PC-9 (cell line): ENCODE measurements at regions of chr19 and their contacts with region 1.

Region 1: DNA sequence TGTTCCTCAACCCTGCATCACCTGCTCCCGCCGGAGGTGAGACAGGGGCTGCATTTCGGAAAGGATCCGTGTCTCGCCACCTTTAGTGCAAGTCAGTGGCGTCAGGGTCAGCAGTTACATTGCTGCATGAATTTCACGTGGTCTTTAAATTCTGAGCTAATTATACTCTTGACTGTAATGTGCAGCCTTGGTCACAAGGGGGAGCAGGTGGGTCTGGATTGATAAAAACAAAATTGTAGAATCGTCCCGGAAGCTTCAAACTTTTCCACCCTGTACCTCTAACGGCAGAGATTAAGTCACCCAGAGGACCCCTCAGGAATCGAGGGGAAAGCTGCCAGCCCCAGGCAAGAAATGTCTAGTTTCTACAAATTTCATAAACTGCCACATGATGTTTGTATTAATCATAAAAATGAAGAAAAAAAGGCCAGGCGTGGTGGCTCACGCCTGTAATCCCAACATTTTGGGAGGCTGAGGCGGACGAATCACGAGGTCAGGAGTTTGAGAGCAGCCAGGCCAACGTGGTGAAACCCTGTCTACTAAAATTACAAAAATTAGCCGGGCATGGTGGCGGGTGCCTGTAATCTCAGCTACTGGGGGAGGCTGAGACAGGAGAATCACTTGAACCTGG is 20.2 kb downstream of the BBC3 start:
- DNase-seq: peak; percentile 67 to 70
- H3K4me3 ChIP-seq: no peak overlapping the region
- H3K27ac ChIP-seq: peak overlapping the region; percentile 70
- H3K4me1 ChIP-seq: peaks cover 15% of the 10 kb centered on the region
- H3K27me3 ChIP-seq: no peaks in the 10 kb centered on the region
- CTCF ChIP-seq: peak; percentile 95

Region 2: GRCh38 chr19:46825525-46825971 is 385.3 kb before region 1 on chr19:
- CTCF ChIA-PET with region 1: interaction called, 10 read pairs
- POLR2A ChIA-PET with region 1: no interaction called
- intact Hi-C with region 1: no loop called
- DNase-seq: peak in 1 of 2 experiments; percentile 93
- H3K4me3 ChIP-seq: no peak overlapping the region; the same call in 1 of the 2 replicates
- H3K27ac ChIP-seq: peak overlapping the region; percentile 49
- H3K4me1 ChIP-seq: peaks cover 58% of the 10 kb centered on the region
- H3K27me3 ChIP-seq: no peaks in the 10 kb centered on the region
- CTCF ChIP-seq: 0 out of 2 replicates have a peak, but pooled peaks have one; percentile 31

Region 3: DNA sequence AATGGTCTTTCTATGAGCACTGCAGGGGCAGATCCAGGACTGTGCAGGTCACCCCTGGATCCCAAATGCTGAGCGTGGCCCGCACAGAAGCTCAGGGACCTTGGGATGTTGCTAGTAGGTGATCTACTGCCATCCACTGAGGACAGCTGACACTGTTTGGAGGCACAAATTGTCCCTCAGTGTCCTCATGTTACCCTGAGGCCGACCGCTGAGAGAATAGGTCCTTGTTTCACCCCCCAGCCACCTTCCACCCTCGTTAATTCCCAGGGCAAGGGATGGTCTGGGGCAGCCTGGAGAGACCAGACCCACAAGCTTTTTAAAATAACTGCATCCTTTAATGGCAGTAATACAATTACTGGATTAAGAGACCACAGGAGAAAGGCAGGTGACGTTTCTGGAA is 146.9 kb before region 1 on chr19:
- CTCF ChIA-PET with region 1: no interaction called
- POLR2A ChIA-PET with region 1: no interaction called
- intact Hi-C with region 1: no loop called
- DNase-seq: no peak
- H3K4me3 ChIP-seq: no peak overlapping the region
- H3K27ac ChIP-seq: no peak overlapping the region
- H3K4me1 ChIP-seq: peaks cover 1% of the 10 kb centered on the region; the same call in 1 of the 2 replicates
- H3K27me3 ChIP-seq: no peaks in the 10 kb centered on the region
- CTCF ChIP-seq: no peak

Region 4: DNA sequence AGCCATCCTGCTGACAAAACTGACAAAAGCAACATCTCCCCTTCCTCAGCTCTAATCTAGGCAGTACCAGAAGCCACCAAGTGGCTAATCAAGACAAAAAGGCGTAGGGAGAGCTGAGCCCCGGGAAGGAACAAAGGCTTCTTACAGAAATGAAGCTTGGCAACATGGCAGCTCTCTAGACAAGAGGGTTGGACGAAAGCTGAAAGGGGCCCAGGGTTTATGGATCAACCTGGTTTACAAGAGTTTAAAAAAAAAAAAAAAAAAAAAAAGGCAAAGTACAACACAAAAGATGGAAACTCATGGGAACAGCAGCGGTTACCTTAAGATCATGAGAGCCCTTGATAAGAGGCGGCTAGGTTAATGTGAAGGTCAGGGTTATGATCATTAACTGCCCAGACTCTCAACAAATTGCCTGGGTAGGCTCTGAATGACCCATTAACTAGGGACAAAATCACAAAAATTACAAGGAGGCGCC is 111.2 kb before region 1 on chr19:
- CTCF ChIA-PET with region 1: interaction called, 16 read pairs
- POLR2A ChIA-PET with region 1: no interaction called
- intact Hi-C with region 1: no loop called
- DNase-seq: no peak
- H3K4me3 ChIP-seq: no peak overlapping the region
- H3K27ac ChIP-seq: no peak overlapping the region
- H3K4me1 ChIP-seq: peaks cover 42% of the 10 kb centered on the region
- H3K27me3 ChIP-seq: no peaks in the 10 kb centered on the region
- CTCF ChIP-seq: no peak

Region 5: GRCh38 chr19:47112997-47113849 is 97.6 kb before region 1 on chr19 and contains the start of gene ZC3H4:
- CTCF ChIA-PET with region 1: no interaction called
- POLR2A ChIA-PET with region 1: no interaction called
- intact Hi-C with region 1: no loop called
- DNase-seq: peak; percentile 98 to 100
- H3K4me3 ChIP-seq: peak within 1 kb of the TSS; percentile 71
- H3K27ac ChIP-seq: peak within 1 kb of the TSS; percentile 98
- H3K4me1 ChIP-seq: peaks cover 31% of the 10 kb centered on the region
- H3K27me3 ChIP-seq: no peaks in the 10 kb centered on the region
- CTCF ChIP-seq: 0 out of 2 replicates have a peak, but pooled peaks have one; percentile 25
- total RNA-seq, gene ZC3H4: 41.6 and 51.9 TPM in 2 replicates

Region 6: DNA sequence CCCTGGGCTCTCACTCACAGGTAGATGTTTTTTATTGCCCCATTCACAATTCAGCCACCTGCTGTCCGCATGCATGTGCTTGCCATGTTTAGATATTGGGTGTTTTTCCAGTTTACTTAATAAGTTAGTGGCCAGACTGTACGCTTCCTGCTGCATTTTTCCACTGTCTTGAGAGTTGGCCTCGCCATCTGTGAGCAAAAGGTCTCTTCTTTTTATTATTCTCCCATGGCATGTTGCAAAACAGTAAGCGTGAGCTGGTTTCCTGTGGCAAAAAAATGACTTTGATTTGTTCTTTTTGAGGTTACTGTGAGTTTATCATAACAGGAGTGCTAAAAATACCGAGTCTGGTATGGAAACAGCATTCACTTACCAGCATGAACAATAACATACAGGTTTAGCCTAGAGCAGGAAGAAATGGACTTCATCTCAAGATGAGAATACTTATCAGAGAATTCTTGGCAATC is 34.1 kb before region 1 on chr19:
- CTCF ChIA-PET with region 1: interaction called, 11 read pairs
- POLR2A ChIA-PET with region 1: interaction called, 3 read pairs
- intact Hi-C with region 1: no loop called
- DNase-seq: no peak
- H3K4me3 ChIP-seq: no peak overlapping the region
- H3K27ac ChIP-seq: no peak overlapping the region
- H3K4me1 ChIP-seq: no peaks in the 10 kb centered on the region
- H3K27me3 ChIP-seq: no peaks in the 10 kb centered on the region
- CTCF ChIP-seq: no peak

Region 7: DNA sequence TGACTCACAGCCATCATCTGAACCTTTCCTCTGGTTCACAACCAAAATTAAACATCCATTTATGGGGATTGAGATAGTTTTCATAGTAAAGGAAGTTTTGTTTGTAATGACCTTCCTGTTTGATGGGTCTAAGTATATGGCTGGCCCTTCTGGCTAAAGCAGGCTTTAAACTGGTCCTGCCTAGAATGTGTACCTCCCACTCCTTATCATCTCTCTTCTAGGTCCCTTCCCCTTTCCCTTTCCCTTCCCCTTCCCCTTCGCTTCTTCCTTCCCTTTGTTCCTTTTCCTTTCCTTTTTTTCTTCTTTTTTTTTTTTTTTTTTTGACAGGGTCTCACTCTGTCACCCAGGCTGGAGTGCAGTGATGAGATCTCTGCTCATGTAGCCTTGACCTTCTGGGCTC is 15.4 kb before region 1 on chr19:
- CTCF ChIA-PET with region 1: interaction called, 11 read pairs
- POLR2A ChIA-PET with region 1: no interaction called
- intact Hi-C with region 1: no loop called
- DNase-seq: no peak
- H3K4me3 ChIP-seq: no peak overlapping the region
- H3K27ac ChIP-seq: no peak overlapping the region
- H3K4me1 ChIP-seq: no peaks in the 10 kb centered on the region
- H3K27me3 ChIP-seq: no peaks in the 10 kb centered on the region
- CTCF ChIP-seq: no peak

Region 8: GRCh38 chr19:47243776-47244547 is 33.2 kb after region 1 on chr19:
- CTCF ChIA-PET with region 1: interaction called, 82 read pairs
- POLR2A ChIA-PET with region 1: interaction called, 5 read pairs
- intact Hi-C with region 1: loop called (anchors 1 kb)
- DNase-seq: peak; percentile 86 to 95
- H3K4me3 ChIP-seq: peak overlapping the region; percentile 71
- H3K27ac ChIP-seq: peak overlapping the region; percentile 87
- H3K4me1 ChIP-seq: peaks cover 26% of the 10 kb centered on the region
- H3K27me3 ChIP-seq: no peaks in the 10 kb centered on the region
- CTCF ChIP-seq: peak; percentile 98

Region 9: DNA sequence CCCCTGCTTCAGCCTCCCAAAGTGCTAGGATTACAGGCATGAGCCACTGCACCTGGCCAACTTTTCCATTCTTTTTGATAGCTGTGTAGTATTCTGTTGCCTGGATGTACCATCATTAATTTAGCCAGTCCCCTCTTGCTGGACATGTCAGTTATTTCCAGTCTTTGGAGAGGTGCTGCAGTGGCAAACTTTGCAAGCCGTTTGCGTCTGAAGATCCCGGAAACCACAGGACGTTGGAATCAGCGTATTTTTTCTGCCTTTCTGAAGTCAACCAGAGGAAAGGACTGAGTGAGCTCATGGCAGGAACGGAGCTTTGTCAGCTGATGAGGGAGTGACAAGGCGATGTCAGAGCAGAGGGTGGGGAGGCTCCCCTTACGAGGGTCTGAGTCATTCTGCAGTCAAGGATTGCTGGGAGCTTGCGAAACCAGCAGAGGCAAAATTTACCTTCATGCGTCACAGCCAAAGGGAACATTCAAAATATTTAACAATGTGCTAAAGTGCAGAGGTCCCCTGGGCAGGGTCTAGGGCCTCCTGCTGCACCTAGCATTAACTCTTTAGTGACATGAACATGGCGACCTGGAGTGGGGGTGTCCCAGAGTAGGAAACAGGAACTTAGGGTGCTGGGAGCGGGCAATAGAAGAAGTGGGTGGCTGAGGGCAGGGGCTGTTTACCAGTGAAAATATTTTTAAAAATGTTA is 104.5 kb after region 1 on chr19:
- CTCF ChIA-PET with region 1: no interaction called
- POLR2A ChIA-PET with region 1: no interaction called
- intact Hi-C with region 1: no loop called
- DNase-seq: peak; percentile 80 to 98
- H3K4me3 ChIP-seq: no peak overlapping the region
- H3K27ac ChIP-seq: peak overlapping the region; percentile 70
- H3K4me1 ChIP-seq: peaks cover 28% of the 10 kb centered on the region
- H3K27me3 ChIP-seq: no peaks in the 10 kb centered on the region
- CTCF ChIP-seq: no peak